Right ventricle myocardium superior (tissue), 1 donor: ENCODE measurements at regions of chr3 and their contacts with region 1.

Region 1: GRCh38 chr3:181709537-181710279 is 2.0 kb upstream of the SOX2 start:
- DNase-seq: peak; percentile 75
- ATAC-seq: no peak

Region 2: GRCh38 chr3:182686033-182686886 is 976.6 kb after region 1 on chr3:
- intact Hi-C with region 1: loop called (anchors 5 kb)
- DNase-seq: no peak
- ATAC-seq: no peak